ENCODE measurements at regions of chr1 and their contacts with region 1.

Region 1: DNA sequence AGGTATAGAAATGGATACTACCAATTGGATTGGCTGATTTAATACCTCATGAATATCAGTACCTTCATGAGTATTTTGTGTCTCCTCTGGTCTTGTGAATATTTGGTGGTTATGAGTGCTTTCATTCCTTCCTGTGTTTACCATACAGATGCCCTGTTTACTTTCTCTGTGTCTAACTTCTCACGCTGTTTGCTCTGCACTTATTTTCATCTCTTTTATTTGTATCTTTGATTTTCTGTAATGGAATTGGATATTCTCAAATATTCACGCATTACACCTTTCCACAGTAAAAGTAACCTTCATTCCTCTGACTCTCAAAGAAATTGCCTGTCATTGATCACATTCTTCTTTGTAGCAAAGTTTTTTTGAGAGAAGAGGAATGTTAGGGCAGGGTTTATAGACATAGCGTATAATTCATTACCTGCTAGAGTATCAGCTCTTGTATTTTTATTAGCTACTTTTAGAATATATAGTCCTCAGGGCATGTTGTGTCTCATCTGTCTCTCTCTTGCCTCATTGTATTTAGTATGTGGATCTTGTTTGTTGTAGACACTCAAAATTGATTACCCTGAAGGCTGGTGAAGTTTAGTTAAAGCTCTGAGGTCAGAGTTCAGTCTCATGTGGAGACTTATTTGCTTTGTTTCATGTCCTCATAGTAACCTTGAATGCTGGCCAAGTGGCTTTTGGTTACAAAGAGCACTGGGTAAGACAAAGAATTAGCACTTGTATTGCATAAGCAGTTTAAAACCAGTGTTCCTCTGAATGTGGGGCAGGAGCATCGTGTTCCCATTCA is 17.0 kb downstream of the CNST start:
- DNase-seq: no peak
- H3K4me3 ChIP-seq: no peak overlapping the region
- H3K27ac ChIP-seq: peak overlapping the region; percentile 73 to 77 (median 75)
- H3K4me1 ChIP-seq: peaks cover 0 to 90% (median 85%) of the 10 kb centered on the region in 4 donors
- H3K27me3 ChIP-seq: no peaks in the 10 kb centered on the region
- CTCF ChIP-seq: no peak
- EP300 ChIP-seq: peak in 1 of 4 donors; percentile 46
- POLR2A ChIP-seq: no peak

Region 2: GRCh38 chr1:246597340-246597739 is 14.1 kb after region 1 on chr1:
- intact Hi-C with region 1: loop called (anchors 2 kb)
- DNase-seq: peak; percentile 87
- H3K4me3 ChIP-seq: no peak overlapping the region
- H3K27ac ChIP-seq: peak overlapping the region; percentile 41 to 76 (median 74)
- H3K4me1 ChIP-seq: peaks cover 0 to 68% (median 51%) of the 10 kb centered on the region in 4 donors
- H3K27me3 ChIP-seq: no peaks in the 10 kb centered on the region
- CTCF ChIP-seq: no peak
- EP300 ChIP-seq: peak; percentile 12 to 87 (median 57)
- POLR2A ChIP-seq: no peak